Activated T-helper 1 cell treated with anti-CD3 and anti-CD28 coated beads, Interleukin-12 subunit alpha, Interleukin-12 subunit beta, Interleukin-2, Interleukin-4 antibody, amounts not matched to agents 30 ng/mL and 10 ng/mL and 1 ng/mL, durations not matched to agents 14 hours and 24 hours and 36 hours (primary cell): ENCODE measurements at regions of chr2 and their contacts with region 1.

Region 1: DNA sequence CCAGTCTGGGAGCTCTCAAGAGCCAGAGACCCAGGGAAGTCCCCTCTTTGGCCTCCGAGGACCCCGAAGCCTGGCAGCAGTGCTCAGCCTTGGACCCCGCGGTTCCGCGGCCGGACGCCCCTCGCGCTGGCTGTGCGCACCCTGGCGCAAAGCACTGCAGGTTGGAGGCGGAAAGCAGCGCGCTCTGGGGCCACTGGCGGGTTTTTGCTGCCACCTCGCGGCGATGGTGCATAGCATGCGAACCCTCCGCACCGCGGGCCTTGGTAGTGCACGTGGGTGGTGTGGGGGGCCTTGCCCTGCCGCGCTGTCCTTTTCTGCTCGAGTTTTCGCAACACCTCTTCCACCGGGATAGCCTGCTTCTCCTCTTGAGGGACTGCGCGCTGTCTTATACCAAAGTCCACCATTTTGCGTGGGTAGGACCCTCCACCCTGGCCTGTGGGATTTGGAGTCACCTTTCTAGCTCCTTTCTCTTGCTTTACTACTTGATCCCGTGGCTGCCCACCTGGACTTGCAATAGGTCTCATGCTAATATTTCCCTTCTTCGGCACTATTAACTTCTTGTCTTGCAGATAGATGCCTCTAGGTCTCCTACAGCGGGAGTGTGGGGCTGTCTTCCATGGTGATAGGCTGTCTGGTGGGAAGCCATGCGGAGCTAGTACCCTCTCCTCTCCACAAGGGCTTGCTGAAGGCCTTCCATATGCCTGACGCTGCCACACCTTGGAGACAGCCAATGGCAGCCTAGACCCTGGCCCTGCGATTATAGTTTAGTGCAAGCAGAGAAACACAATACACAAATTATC is 14.3 kb downstream of the SIX3 start:
- DNase-seq: peak; percentile 60
- H3K4me3 Mint-ChIP-seq: no peak overlapping the region
- H3K27ac Mint-ChIP-seq: no peak overlapping the region
- H3K4me1 Mint-ChIP-seq: no peaks in the 10 kb centered on the region
- H3K27me3 Mint-ChIP-seq: peaks cover 63% of the 10 kb centered on the region

Region 2: DNA sequence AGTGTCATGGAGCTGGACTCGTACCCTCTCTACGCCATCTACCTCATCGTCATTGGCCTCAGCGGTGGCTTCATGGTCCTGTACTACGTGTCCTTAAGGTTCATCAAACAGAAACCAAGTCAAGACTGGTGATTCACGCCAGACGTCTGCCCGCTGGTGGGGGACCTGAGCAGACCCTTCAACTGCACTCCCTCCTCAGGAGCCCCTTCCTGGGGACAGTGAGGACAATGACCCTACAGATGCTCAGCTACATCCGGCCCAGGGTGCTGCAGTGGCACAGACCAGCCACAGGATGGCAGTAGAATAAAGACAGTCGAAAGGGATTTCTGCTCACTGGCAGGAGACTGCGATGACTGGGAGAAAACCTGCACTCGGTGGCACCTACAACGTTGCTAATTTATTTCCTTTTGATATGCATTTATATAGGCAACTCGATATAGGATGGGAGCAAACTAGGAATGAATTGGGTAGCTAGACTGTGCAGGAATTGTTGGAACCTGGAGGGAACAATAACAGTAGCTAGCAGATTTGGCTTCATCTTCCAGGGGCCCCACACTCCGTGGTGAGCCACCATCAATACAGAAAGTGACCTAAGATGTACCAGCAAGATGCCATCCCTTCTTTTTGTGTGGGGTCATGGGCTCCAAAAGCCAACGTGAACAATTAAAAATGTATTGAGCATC is 1077.9 kb before region 1 on chr2:
- intact Hi-C with region 1: loop called (anchors 5 kb)
- DNase-seq: peak; percentile 51
- H3K4me3 Mint-ChIP-seq: no peak overlapping the region
- H3K27ac Mint-ChIP-seq: no peak overlapping the region
- H3K4me1 Mint-ChIP-seq: peaks cover 7% of the 10 kb centered on the region
- H3K27me3 Mint-ChIP-seq: peaks cover under 1% of the 10 kb centered on the region

Region 3: DNA sequence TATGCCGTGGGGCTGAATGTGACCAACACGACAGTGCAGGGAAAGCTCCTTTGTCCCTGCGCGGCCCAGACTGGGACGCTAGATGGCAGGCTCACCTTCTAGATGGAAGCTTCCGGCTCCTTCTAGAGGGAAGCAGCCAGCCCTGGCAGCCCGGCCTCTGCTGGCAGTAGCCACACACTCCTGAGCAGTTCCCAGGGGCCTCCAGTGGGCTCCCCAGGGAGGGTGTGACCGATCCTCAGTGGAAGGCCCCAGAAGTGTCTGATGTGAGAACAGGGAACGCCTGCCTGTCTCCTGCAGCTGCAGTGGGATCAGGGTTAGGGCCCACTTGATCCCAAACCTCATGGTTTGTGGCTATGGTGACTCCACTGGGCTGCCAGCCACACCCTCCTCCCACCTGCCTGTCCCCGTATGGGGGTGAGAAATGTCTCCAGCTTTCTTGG is 911.5 kb before region 1 on chr2:
- intact Hi-C with region 1: loop called (anchors 1 kb)
- DNase-seq: peak; percentile 70
- H3K4me3 Mint-ChIP-seq: no peak overlapping the region
- H3K27ac Mint-ChIP-seq: no peak overlapping the region
- H3K4me1 Mint-ChIP-seq: no peaks in the 10 kb centered on the region
- H3K27me3 Mint-ChIP-seq: peaks cover 10% of the 10 kb centered on the region

Region 4: GRCh38 chr2:44392338-44392943 is 563.4 kb before region 1 on chr2:
- intact Hi-C with region 1: loop called (anchors 1 kb)
- DNase-seq: no peak
- H3K4me3 Mint-ChIP-seq: no peak overlapping the region
- H3K27ac Mint-ChIP-seq: no peak overlapping the region
- H3K4me1 Mint-ChIP-seq: no peaks in the 10 kb centered on the region
- H3K27me3 Mint-ChIP-seq: no peaks in the 10 kb centered on the region

Region 5: DNA sequence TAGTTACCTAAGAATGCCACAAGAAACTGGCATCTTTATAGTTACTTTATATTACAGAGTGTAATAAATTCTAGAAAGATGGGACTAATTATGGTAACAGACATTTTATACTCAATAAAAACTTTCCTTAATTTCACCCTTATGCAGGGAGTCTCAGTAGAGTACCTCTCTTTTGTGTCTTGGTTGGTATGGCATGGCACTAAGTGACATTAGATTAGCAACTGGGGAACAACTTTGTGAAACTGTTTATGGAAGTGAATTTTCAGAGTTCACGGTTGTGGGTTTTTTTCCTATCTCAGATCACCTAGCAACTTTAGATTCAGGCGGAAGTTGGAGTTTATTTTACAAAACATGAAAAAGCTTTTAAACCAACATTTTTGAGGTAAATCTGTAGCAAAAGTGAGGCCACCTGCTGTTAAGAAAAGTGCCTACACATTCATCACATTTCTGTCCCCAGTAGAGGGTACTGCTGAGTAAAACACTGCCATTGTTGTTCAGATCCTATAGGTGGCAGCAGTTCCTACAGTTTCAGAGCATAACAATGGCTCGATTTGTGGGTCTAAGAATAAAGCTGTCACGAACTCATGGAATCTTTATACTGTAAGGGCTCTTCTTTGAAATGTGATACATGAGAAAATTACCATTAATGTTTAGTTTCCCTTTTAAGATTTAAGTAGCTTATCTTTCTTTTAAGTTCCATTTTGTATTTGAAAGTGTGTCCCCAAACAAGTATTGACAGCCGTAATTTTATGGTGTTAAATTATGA is 476.5 kb before region 1 on chr2:
- intact Hi-C with region 1: loop called (anchors 1 kb)
- DNase-seq: peak; percentile 24
- H3K4me3 Mint-ChIP-seq: no peak overlapping the region
- H3K27ac Mint-ChIP-seq: no peak overlapping the region
- H3K4me1 Mint-ChIP-seq: no peaks in the 10 kb centered on the region
- H3K27me3 Mint-ChIP-seq: no peaks in the 10 kb centered on the region

Region 6: DNA sequence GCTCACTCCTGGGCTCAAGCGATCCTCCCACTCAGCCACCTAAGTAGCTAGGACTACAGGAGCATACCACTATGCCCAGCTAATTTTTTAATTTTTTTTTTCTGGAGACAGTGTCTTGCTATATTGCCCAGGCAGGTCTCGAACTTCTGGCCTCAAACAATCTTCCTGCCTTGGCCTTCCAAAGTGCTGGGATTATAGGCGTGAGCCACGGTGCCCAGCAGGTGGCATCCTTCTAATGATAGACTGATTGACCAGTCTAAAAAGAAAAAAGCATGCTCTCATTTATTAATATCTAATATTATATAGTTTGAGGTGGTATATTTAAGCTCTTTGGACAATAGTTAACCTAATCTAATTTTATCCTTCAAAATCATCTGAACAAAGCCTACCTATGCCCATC is 395.4 kb before region 1 on chr2:
- intact Hi-C with region 1: loop called (anchors 10 kb)
- DNase-seq: no peak
- H3K4me3 Mint-ChIP-seq: no peak overlapping the region
- H3K27ac Mint-ChIP-seq: no peak overlapping the region
- H3K4me1 Mint-ChIP-seq: no peaks in the 10 kb centered on the region
- H3K27me3 Mint-ChIP-seq: no peaks in the 10 kb centered on the region

Region 7: DNA sequence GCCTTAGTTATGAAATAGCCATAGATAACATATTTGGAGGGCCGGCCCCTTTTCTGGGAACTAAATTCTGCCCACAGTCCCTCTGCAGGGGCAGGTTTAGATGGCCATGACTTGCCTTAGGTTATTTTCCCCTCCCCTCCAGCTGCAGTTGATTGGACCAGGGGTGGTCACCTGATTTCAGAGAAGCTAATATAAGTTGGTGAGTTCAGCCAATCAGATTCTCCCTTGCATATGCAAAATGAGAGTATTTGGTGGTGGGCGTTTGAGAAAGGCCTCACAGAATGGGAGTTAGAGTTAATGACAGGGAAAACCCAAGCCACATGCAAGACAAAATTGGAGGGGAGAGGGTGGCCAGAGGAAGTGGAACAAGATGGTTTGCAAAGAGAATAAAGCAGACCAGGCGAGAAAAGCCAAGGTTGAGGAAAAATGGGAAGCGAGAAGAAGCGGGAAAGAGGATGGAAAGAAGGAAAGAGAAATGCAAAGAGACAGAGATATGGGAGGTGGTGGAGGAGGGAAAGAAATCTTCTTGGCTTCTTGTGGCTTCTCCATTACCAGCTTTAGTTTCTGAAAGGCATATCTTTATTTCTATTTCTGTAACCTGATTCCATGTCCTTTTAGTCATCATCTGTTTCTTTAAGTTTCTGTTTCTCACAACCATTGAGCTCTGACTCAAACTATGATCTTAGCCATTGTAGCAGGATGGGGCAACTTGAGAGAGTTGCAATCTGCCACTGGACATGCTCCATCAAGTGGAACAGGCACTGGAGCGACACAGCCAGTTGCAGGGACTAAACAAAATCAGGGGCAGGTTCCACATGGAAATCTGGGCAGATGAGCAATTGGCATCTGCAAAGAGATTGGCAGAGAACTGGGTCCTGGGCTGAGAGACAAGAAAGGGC is 122.4 kb before region 1 on chr2:
- intact Hi-C with region 1: no loop called
- DNase-seq: no peak
- H3K4me3 Mint-ChIP-seq: no peak overlapping the region
- H3K27ac Mint-ChIP-seq: peak overlapping the region; percentile 69
- H3K4me1 Mint-ChIP-seq: peaks cover 33% of the 10 kb centered on the region
- H3K27me3 Mint-ChIP-seq: peaks cover 2% of the 10 kb centered on the region

Region 8: DNA sequence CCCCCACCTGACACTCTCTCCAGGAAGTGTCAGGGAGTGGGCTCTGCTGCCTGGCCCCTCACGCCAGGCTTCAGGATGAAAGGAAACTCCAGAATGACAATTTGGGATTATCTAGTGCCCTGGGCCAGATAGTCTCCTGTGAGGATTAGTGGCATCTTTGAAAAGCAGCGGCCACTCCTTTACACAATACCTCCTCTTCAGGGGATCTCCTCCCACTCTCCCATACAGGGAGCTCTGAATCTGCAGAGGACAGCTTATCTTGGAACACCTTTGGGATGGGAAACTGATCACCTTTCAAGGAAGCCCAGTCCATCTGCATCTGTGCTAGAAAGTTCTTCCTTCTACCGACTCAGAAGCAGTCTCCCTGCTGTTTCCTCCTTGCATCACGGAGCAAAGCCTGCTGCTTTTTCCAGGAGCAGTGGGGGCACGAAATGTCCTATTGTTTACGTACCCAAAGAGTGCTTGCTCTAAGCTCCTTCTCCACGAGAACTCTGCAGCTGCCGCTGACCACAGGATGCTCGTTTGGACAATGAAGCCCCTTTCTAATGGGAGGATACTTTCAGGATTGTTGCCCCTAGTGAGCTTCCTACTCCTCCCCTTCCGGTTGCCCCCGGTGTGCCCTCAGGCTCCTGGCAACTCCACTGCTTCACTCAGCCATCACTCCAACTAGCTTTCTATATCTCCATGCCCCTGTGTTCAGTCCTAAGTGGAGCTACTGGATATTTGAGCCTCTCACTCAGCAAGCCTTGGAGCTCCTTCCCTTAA is 17.2 kb after region 1 on chr2:
- intact Hi-C with region 1: no loop called
- DNase-seq: no peak
- H3K4me3 Mint-ChIP-seq: no peak overlapping the region
- H3K27ac Mint-ChIP-seq: no peak overlapping the region
- H3K4me1 Mint-ChIP-seq: no peaks in the 10 kb centered on the region
- H3K27me3 Mint-ChIP-seq: peaks cover 7% of the 10 kb centered on the region

Region 9: GRCh38 chr2:45000921-45001868 is 45.4 kb after region 1 on chr2:
- intact Hi-C with region 1: loop called (anchors 5 kb)
- DNase-seq: no peak
- H3K4me3 Mint-ChIP-seq: no peak overlapping the region
- H3K27ac Mint-ChIP-seq: no peak overlapping the region
- H3K4me1 Mint-ChIP-seq: no peaks in the 10 kb centered on the region
- H3K27me3 Mint-ChIP-seq: peaks cover 73% of the 10 kb centered on the region